Ovary (tissue), 10 donors: ENCODE measurements at regions of chr11 and their contacts with region 1.

Region 1: GRCh38 chr11:18698341-18699268 is at the start of gene TMEM86A:
- DNase-seq: peak; percentile 96 to 98 (median 97)
- H3K4me3 ChIP-seq: peak within 1 kb of the TSS; percentile 95
- H3K27ac ChIP-seq: peak within 1 kb of the TSS; percentile 100
- H3K4me1 ChIP-seq: peaks cover 20% of the 10 kb centered on the region
- H3K27me3 ChIP-seq: no peaks in the 10 kb centered on the region
- CTCF ChIP-seq: peak in 1 of 3 donors; percentile 26
- EP300 ChIP-seq: peak; percentile 46
- POLR2A ChIP-seq: peak; percentile 95
- total RNA-seq, gene TMEM86A: 8.4 to 18.2 (median 14.9) TPM

Region 2: DNA sequence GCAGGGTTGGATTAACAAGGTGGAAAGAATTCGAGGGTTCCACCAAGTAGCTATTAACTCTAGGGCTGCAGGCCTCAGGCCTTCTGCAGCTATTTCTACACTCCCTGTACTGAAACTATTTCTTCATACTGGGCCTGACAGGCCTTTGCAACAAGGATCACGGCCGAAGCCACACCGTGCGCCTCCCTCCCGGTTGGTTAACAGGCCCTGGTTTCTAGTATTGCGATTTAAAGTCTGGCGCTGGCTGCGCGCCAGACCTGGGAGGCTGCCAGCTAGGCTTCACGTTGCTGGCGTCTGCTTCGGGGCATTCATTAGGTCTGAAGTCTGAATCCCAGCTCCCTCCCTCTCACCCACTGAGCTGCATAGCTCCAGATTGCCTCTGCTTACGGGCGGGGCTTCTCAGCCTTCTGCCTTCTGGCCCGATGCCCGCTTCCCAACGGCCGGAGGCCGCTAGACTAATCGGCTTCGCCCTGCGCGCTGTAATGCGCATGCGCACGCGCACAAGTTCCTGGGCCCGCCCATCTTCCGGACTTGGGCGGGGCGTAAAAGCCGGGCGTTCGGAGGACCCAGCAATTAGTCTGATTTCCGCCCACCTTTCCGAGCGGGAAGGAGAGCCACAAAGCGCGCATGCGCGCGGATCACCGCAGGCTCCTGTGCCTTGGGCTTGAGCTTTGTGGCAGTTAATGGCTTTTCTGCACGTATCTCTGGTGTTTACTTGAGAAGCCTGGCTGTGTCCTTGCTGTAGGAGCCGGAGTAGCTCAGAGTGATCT is 302.7 kb before region 1 on chr11:
- intact Hi-C with region 1: loop called in 1 of 4 experiments (anchors 10 kb)
- DNase-seq: peak; percentile 99 to 100 (median 99)
- H3K4me3 ChIP-seq: peak overlapping the region; percentile 74
- H3K27ac ChIP-seq: peak overlapping the region; percentile 76 to 92
- H3K4me1 ChIP-seq: peaks cover 3% of the 10 kb centered on the region
- H3K27me3 ChIP-seq: no peaks in the 10 kb centered on the region
- CTCF ChIP-seq: no peak
- EP300 ChIP-seq: peak; percentile 37
- POLR2A ChIP-seq: peak; percentile 68

Region 3: GRCh38 chr11:18427240-18427639 is 271.4 kb before region 1 on chr11:
- intact Hi-C with region 1: no loop called
- DNase-seq: no peak
- H3K4me3 ChIP-seq: no peak overlapping the region
- H3K27ac ChIP-seq: no peak overlapping the region
- H3K4me1 ChIP-seq: no peaks in the 10 kb centered on the region
- H3K27me3 ChIP-seq: no peaks in the 10 kb centered on the region
- CTCF ChIP-seq: no peak
- EP300 ChIP-seq: no peak
- POLR2A ChIP-seq: no peak

Region 4: GRCh38 chr11:18721561-18722292 is 23.1 kb after region 1 on chr11:
- intact Hi-C with region 1: loop called in 1 of 4 experiments (anchors 2 kb)
- DNase-seq: peak; percentile 65 to 71 (median 67)
- H3K4me3 ChIP-seq: peak overlapping the region; percentile 64
- H3K27ac ChIP-seq: peak overlapping the region; percentile 71 to 80
- H3K4me1 ChIP-seq: peaks cover 3% of the 10 kb centered on the region
- H3K27me3 ChIP-seq: no peaks in the 10 kb centered on the region
- CTCF ChIP-seq: peak; percentile 33 to 59 (median 58)
- EP300 ChIP-seq: no peak
- POLR2A ChIP-seq: no peak

Region 5: DNA sequence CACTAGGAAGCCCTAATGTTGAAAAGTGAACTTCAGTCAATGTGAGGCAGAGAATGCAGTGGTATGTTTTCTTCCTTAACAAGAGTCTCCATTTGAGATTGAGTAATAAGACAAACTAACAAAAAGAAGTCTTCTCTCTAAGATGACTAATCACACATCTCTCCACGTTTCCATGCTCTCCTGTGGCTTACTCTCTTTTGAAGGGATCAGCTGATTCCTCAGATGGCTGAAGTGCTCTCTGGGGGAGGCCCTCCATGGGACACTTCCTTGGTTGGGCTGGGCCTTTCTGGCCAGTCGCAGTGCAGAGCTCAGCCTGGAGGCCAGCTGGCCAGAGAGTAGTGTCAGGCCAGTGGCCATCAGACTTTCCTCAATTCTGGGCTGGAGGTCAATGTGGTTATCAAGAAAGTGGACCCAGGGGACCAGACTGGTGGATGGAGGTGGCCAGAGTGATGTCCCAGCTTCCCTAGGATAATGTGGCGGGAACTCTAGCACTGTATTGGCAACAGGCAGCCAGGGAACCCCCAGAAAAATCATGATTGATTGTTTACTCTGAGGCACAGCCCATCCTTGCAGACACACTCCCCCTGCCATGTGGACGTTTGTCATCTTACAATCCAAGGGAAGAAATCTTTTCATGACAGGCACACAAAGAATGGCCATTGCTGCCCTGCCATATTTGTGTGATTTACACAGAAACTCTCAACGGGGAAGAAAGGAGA is 488.7 kb after region 1 on chr11:
- intact Hi-C with region 1: no loop called
- DNase-seq: no peak
- H3K4me3 ChIP-seq: no peak overlapping the region
- H3K27ac ChIP-seq: no peak overlapping the region
- H3K4me1 ChIP-seq: no peaks in the 10 kb centered on the region
- H3K27me3 ChIP-seq: no peaks in the 10 kb centered on the region
- CTCF ChIP-seq: no peak
- EP300 ChIP-seq: no peak
- POLR2A ChIP-seq: no peak